ENCODE measurements at regions of chr18 and their contacts with region 1.

Region 1: DNA sequence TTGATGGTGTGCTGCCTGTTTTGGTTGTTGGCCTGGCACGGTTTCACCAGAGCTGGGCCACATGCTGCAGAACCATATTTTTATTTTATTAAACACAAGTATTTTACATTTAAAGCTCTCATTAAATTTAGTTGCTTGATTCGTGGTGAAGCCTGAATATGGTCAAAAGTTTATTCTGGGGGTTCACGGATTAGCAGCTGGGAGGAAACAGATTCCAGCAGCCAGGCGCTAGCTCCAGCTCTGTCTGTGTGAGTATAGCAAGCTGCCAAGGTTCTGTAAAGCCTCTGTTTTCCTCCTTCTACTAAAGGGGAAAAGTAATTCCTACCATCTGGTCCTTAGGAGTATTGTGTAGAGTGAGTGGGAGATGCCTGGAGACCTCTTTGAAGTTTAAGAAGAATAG is 22.5 kb downstream of the GATA6 start:
- DNase-seq: no peak
- ATAC-seq: no peak

Region 2: GRCh38 chr18:21955757-21956652 is 235.9 kb before region 1 on chr18:
- intact Hi-C with region 1: no loop called
- DNase-seq: peak; percentile 90
- ATAC-seq: peak; percentile 88

Region 3: GRCh38 chr18:22176420-22177326 is 15.2 kb before region 1 on chr18:
- intact Hi-C with region 1: loop called (anchors 2 kb)
- DNase-seq: no peak
- ATAC-seq: peak; percentile 58

Region 4: DNA sequence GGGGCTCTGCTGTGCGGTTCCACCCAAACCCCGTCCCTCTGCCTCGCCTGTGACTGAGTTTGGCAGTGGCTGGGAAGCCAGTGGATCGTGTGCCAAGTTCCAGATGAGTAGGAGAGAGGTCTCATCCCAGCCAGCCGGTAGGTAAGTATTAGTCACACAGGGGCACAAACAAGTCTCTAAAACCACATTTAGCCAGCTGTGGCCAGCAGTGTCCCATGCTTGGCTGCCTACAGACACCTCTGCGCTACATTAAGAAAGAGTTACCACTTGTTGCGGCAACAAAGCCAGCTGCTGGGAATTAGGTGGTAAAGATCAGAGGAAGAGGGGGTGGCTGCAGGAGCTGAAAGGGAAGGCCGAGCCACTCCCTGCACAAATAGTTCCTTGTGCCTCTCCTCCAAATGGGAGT is 58.7 kb after region 1 on chr18:
- intact Hi-C with region 1: no loop called
- DNase-seq: no peak
- ATAC-seq: no peak

Measured in Right ventricle myocardium inferior (tissue), 1 donor.